HCT116 (cell line): ENCODE measurements at regions of chr5 and their contacts with region 1.

Region 1: DNA sequence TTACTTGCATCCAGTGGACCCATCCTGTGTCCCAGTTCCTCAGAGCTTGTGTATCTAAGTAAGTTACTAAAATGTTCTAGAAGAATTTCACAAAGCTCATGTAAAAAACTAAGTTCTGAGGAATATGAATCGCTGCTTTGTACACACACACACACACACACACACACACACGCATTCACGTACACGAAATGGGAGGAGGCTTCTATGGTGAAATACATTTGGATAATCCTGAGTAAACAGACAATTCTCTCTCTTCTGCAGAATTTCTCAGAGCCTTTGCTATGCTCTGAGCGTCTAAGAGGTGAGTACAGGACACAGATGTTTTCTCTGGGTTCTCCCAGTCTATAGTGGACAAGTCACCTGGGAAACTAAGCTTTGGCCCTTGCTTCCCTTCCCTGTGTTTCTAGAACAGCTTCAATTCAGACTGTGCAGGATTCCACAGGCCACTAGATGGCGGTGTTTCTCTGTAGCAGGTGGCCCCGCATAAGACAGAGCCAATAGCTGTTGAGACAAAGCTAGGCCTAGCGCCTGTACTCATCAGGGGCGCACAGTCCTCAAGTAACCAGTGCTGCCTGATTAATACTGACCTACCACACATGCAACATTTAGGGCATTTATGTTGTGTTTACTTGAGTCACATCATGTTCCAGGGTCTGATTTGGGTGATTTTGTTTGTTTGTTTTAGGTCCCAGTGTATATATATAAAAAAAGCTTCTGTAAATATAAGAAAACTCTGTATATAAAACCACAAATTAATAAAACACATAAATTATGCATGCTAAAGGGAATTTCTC is 114.8 kb downstream of the LIFR start:
- DNase-seq: peak; percentile 90
- ATAC-seq: peak; percentile 100
- H3K4me3 ChIP-seq: no peak overlapping the region
- H3K27ac ChIP-seq: no peak overlapping the region
- H3K4me1 ChIP-seq: no peaks in the 10 kb centered on the region
- H3K27me3 ChIP-seq: no peaks in the 10 kb centered on the region
- CTCF ChIP-seq: peak; percentile 94 to 98 (median 94)
- POLR2A ChIP-seq: no peak
- RAD21 ChIP-seq: peak; percentile 99

Region 2: GRCh38 chr5:37988454-37989046 is 453.1 kb before region 1 on chr5:
- CTCF ChIA-PET with region 1: no interaction called
- POLR2A ChIA-PET with region 1: no interaction called
- RAD21 ChIA-PET with region 1: no interaction called
- intact Hi-C with region 1: no loop called
- DNase-seq: no peak
- ATAC-seq: no peak
- H3K4me3 ChIP-seq: no peak overlapping the region
- H3K27ac ChIP-seq: no peak overlapping the region
- H3K4me1 ChIP-seq: no peaks in the 10 kb centered on the region
- H3K27me3 ChIP-seq: peaks cover 51% of the 10 kb centered on the region
- CTCF ChIP-seq: no peak
- POLR2A ChIP-seq: no peak
- RAD21 ChIP-seq: no peak

Region 3: GRCh38 chr5:38382898-38383297 is 58.8 kb before region 1 on chr5:
- CTCF ChIA-PET with region 1: interaction called, 24 read pairs
- POLR2A ChIA-PET with region 1: no interaction called
- RAD21 ChIA-PET with region 1: interaction called, 4 to 6 read pairs
- intact Hi-C with region 1: no loop called
- DNase-seq: peak; percentile 80
- ATAC-seq: peak; percentile 100
- H3K4me3 ChIP-seq: no peak overlapping the region
- H3K27ac ChIP-seq: no peak overlapping the region
- H3K4me1 ChIP-seq: no peaks in the 10 kb centered on the region
- H3K27me3 ChIP-seq: peaks cover 20% of the 10 kb centered on the region; the same call in 1 of the 2 replicates
- CTCF ChIP-seq: peak; percentile 64 to 86 (median 84); a peak in 5 of 6 replicates
- POLR2A ChIP-seq: no peak
- RAD21 ChIP-seq: peak; percentile 76

Region 4: DNA sequence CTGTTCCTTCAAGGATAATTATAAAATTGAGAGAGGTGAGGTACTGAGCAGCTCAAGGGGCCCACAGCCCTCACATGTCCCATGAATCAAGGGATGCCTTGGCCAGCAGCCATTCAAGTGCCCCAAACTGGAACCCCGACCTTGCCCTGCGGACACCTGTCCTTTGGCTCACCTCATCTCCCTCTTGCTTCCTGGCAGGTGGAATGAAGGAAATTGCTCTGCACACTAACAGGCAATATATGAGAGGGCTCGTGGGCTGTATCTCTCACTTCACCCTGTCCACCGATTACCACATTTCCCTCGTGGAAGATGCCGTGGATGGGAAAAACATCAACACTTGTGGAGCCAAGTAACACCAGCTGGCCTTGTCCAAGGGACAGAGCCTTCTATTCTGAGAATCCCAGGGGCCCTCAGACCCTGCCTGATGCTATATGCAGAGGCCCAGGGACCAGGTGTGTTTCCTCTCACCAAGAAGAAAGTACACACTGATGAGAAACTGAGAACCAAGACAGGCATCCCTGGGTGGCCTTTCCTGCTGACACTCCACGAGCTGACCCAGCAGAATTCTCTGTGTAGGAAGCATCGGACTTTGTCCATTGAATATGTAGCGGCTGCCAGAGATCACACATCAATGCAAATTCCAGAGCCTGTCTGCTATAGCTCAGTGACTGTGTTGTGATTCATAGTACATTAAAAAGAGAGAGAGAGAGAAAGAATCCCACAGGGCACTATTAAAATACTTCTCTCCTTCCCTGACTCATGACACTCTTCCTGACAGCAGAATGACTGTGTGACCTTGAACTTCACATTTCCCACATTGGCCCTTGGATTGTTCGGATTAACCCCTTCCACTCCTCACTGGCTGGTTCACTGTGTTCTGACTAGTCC is 22.2 kb after region 1 on chr5:
- CTCF ChIA-PET with region 1: interaction called, 24 read pairs
- POLR2A ChIA-PET with region 1: no interaction called
- RAD21 ChIA-PET with region 1: interaction called in 1 of 2 experiments, 4 read pairs
- intact Hi-C with region 1: no loop called
- DNase-seq: peak; percentile 84
- ATAC-seq: peak; percentile 89
- H3K4me3 ChIP-seq: peak overlapping the region; percentile 10 to 42; a peak in 3 of 4 replicates
- H3K27ac ChIP-seq: no peak overlapping the region
- H3K4me1 ChIP-seq: peaks cover 27 to 67% of the 10 kb centered on the region in 2 experiments
- H3K27me3 ChIP-seq: no peaks in the 10 kb centered on the region
- CTCF ChIP-seq: no peak
- POLR2A ChIP-seq: no peak
- RAD21 ChIP-seq: 0 out of 2 replicates have a peak, but pooled peaks have one; percentile 11

Region 5: DNA sequence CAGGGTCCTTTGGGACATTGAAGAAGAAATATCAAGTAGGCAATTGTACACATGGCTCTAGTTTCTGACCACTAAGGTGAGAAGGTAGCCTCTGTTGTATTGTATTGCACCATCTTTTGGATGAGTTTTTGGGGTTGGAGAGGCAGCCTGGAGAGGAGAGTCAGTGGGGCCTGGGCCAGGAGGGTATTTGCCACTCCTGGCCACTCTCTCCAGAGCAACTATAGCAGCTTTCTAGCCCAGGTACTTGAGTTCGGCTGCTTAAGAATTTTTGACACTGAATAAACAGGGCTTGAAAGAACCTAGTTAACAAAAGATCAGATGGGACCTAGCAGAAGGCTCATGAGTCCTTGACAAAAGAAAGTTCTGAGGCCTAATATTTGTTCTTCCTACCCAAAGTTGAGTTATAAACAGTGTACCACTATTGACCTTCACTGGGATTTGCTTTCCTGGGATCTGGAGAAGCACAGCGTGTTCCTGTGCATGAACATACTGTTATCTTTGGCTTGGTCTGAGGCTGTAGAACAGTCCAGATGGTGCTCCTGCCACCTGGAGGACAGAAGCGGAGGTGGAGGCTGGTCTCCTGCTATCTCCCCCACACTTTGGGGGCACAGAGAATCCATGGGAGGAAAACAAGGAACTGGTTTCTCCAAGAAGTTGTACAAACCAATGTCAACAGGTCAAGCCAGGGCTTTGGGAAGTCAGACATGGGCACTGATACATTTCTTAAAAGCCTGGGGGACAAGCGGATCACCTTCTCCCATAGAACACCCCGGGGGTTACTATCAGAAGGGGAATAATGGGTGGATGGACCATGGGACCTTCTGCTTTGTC is 225.2 kb after region 1 on chr5:
- CTCF ChIA-PET with region 1: interaction called, 65 read pairs
- POLR2A ChIA-PET with region 1: interaction called, 3 read pairs
- RAD21 ChIA-PET with region 1: interaction called, 6 to 17 read pairs
- intact Hi-C with region 1: loop called (anchors 1 kb)
- DNase-seq: peak; percentile 19
- ATAC-seq: peak; percentile 97
- H3K4me3 ChIP-seq: no peak overlapping the region
- H3K27ac ChIP-seq: no peak overlapping the region
- H3K4me1 ChIP-seq: no peaks in the 10 kb centered on the region
- H3K27me3 ChIP-seq: no peaks in the 10 kb centered on the region
- CTCF ChIP-seq: peak; percentile 67 to 80 (median 75); a peak in 5 of 6 replicates
- POLR2A ChIP-seq: no peak
- RAD21 ChIP-seq: peak; percentile 90

Region 6: DNA sequence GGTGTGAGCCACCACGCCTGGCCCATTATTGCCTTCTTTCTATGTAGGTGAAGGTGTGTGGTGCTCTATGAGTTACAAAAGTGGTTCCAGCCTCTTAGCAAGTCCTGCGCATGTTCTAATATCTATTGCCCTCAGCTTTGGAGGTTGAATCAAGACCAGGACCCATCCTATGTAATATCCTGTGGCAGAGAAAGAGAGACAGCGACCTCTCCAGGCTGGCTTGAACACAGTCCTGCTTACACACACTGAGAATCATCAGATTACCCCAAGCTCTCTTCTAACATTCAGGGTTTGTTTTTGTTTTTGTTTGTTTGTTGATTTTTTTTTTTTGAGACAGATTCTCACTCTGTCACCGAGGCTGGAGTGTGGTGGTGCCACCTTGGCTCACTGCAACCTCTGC is 309.5 kb after region 1 on chr5:
- CTCF ChIA-PET with region 1: interaction called, 13 read pairs
- POLR2A ChIA-PET with region 1: interaction called, 3 read pairs
- RAD21 ChIA-PET with region 1: interaction called, 5 to 6 read pairs
- intact Hi-C with region 1: no loop called
- DNase-seq: no peak
- ATAC-seq: peak; percentile 63
- H3K4me3 ChIP-seq: no peak overlapping the region
- H3K27ac ChIP-seq: no peak overlapping the region
- H3K4me1 ChIP-seq: no peaks in the 10 kb centered on the region
- H3K27me3 ChIP-seq: no peaks in the 10 kb centered on the region
- CTCF ChIP-seq: peak; percentile 8 to 51 (median 43); a peak in 4 of 6 replicates
- POLR2A ChIP-seq: no peak
- RAD21 ChIP-seq: peak; percentile 44; the same call in 1 of the 2 replicates

Region 7: GRCh38 chr5:39080597-39081204 is 639.1 kb after region 1 on chr5:
- CTCF ChIA-PET with region 1: interaction called, 12 read pairs
- POLR2A ChIA-PET with region 1: no interaction called
- RAD21 ChIA-PET with region 1: interaction called in 1 of 2 experiments, 6 read pairs
- intact Hi-C with region 1: no loop called
- DNase-seq: peak; percentile 60
- ATAC-seq: peak; percentile 78
- H3K4me3 ChIP-seq: no peak overlapping the region
- H3K27ac ChIP-seq: no peak overlapping the region
- H3K4me1 ChIP-seq: peaks cover 7 to 40% of the 10 kb centered on the region in 2 experiments; a peak in 3 of 4 replicates
- H3K27me3 ChIP-seq: no peaks in the 10 kb centered on the region
- CTCF ChIP-seq: peak; percentile 34 to 91 (median 84); a peak in 5 of 6 replicates
- POLR2A ChIP-seq: no peak
- RAD21 ChIP-seq: peak; percentile 63